ENCODE measurements at regions of chr12 and their contacts with region 1.

Region 1: GRCh38 chr12:42172441-42173210 is 28.0 kb upstream of the GXYLT1 start:
- DNase-seq: no peak
- ATAC-seq: no peak
- H3K4me3 Mint-ChIP-seq: no peak overlapping the region
- H3K27ac Mint-ChIP-seq: peak overlapping the region; percentile 33
- H3K4me1 Mint-ChIP-seq: peaks cover 24% of the 10 kb centered on the region
- H3K27me3 Mint-ChIP-seq: no peaks in the 10 kb centered on the region
- CTCF ChIP-seq: no peak

Region 2: DNA sequence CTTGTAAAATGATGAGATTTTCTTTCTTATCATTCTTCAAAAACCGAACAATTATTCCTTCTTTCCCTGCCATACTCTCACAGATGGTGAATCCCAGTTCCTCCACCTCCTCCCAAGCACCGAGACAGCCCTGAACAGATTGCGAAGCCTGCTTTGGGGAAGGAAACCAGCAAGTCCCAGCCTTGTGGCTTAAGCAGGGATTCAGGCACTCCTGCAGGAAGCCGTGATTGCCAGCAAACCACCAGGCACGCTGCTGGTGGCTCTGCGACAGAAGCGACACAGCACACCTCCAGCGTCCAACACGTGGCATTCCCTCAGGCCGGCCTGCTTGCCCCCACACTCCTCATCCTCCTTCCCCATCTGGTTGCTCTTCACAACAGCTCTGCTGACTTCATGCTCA is 265.6 kb before region 1 on chr12:
- CTCF ChIA-PET with region 1: no interaction called
- POLR2A ChIA-PET with region 1: no interaction called
- intact Hi-C with region 1: no loop called
- DNase-seq: no peak
- ATAC-seq: no peak
- H3K4me3 Mint-ChIP-seq: no peak overlapping the region
- H3K27ac Mint-ChIP-seq: no peak overlapping the region
- H3K4me1 Mint-ChIP-seq: no peaks in the 10 kb centered on the region
- H3K27me3 Mint-ChIP-seq: no peaks in the 10 kb centered on the region
- CTCF ChIP-seq: no peak

Region 3: DNA sequence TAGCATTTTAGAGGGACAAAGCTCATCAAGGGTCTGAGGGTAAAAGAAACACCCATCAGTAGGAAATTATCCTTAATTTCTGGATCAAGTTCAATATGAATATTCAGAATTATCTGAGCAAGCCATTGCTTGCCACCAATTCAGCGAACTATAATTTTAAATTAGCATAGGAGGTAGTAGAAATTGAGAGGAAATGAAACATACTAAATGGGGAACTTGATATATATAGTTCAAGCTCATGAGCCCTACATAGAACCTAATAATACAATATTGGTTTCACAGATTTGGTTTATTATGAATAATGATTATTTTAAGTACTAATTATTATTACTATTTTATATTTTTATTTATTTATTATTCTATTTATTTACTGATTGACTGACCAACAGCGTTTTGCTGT is 14.2 kb after region 1 on chr12:
- CTCF ChIA-PET with region 1: no interaction called
- POLR2A ChIA-PET with region 1: no interaction called
- intact Hi-C with region 1: loop called (anchors 2 kb)
- DNase-seq: no peak
- ATAC-seq: peak; percentile 92
- H3K4me3 Mint-ChIP-seq: no peak overlapping the region
- H3K27ac Mint-ChIP-seq: no peak overlapping the region
- H3K4me1 Mint-ChIP-seq: peaks cover 46% of the 10 kb centered on the region
- H3K27me3 Mint-ChIP-seq: no peaks in the 10 kb centered on the region
- CTCF ChIP-seq: no peak

Region 4: DNA sequence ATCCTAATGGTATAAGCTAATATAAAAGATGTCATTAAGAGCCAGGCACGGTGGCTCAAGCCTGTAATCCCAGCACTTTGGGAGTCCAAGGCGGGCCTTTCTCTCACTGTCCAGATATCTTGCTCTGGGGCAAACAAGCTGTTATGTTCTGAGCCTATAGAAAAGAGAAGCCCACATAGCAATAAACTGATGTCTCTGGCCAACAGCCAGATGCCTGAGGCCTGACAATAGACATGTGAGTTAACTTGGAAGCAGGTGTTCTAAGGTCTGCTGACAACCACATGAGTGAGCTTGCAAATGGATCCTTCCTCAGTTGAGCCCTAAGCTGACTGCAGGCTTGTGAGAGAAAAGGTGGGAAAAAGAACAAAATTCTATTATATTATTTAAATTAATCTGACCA is 40.4 kb after region 1 on chr12:
- CTCF ChIA-PET with region 1: no interaction called
- POLR2A ChIA-PET with region 1: no interaction called
- intact Hi-C with region 1: no loop called
- DNase-seq: no peak
- ATAC-seq: no peak
- H3K4me3 Mint-ChIP-seq: no peak overlapping the region
- H3K27ac Mint-ChIP-seq: no peak overlapping the region
- H3K4me1 Mint-ChIP-seq: peaks cover 19% of the 10 kb centered on the region
- H3K27me3 Mint-ChIP-seq: no peaks in the 10 kb centered on the region
- CTCF ChIP-seq: no peak

Region 5: DNA sequence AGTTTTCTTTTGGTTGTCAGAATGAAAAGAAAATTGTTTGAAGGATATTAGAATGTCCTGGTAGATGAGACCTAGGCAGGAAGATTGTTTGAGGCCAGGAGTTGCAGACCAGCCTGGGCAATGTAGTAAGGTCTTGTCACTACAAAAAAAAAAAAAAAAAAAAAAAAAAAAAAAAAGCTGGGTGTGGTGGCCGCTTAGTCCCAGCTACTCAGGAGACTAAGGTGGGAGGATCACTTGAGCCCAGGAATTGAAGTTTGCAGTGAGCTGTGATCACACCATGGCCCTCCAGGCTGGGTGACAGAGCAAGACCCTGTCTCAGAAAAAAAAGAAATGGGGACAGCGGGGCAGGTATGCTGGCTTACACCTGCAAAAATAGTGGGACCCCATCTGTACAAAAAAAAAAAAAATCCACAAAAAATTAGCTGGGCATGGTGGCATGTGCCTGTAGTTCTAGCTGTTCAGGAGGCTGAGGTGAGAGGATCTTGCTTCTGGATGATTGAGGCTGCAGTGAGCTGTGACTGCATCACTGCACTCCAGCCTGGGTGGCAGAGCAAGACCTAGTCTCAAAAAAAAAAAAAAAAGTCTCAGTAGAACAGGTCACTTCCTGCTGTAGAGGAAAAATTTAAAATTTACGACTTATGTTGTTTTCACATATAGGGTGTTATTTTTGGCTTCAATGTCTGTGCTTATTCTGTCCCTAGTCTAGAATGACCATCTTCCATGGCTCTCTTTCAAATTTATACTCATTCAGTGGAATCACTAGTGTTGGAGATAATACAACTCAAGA is 224.0 kb after region 1 on chr12:
- CTCF ChIA-PET with region 1: no interaction called
- POLR2A ChIA-PET with region 1: no interaction called
- intact Hi-C with region 1: no loop called
- DNase-seq: no peak
- ATAC-seq: peak; percentile 62
- H3K4me3 Mint-ChIP-seq: no peak overlapping the region
- H3K27ac Mint-ChIP-seq: peak overlapping the region; percentile 41
- H3K4me1 Mint-ChIP-seq: peaks cover 20% of the 10 kb centered on the region
- H3K27me3 Mint-ChIP-seq: no peaks in the 10 kb centered on the region
- CTCF ChIP-seq: no peak